ENCODE measurements at regions of chr13 and their contacts with region 1.

Region 1: DNA sequence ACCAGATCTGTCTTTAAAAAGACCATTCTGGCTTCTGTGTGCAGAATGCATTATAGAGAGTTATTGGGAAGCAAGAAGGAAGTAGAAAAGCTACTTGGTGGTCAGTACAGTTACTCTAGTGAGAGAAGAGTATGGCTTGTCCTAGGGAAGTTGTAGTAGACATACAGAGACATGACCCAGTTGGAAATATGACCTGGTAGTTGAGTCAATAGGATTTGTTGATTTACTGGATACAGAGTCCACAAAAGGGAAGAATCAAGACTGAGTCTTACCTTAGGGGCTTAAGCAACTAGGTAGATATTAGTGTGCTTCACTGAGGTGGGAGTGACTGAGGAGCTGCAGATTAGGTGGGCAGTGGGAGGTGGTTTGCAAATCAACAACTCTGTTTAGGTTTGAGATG is 48.8 kb downstream of the RASL11A start:
- DNase-seq: no peak
- H3K4me3 ChIP-seq: no peak overlapping the region
- H3K27ac ChIP-seq: no peak overlapping the region
- H3K4me1 ChIP-seq: no peaks in the 10 kb centered on the region
- H3K27me3 ChIP-seq: peaks cover 30% of the 10 kb centered on the region
- CTCF ChIP-seq: no peak

Region 2: GRCh38 chr13:27283906-27284493 is 35.4 kb before region 1 on chr13:
- CTCF ChIA-PET with region 1: no interaction called
- POLR2A ChIA-PET with region 1: no interaction called
- intact Hi-C with region 1: loop called (anchors 2 kb)
- DNase-seq: peak; percentile 46 to 49
- H3K4me3 ChIP-seq: no peak overlapping the region
- H3K27ac ChIP-seq: no peak overlapping the region
- H3K4me1 ChIP-seq: peaks cover 20% of the 10 kb centered on the region
- H3K27me3 ChIP-seq: no peaks in the 10 kb centered on the region
- CTCF ChIP-seq: peak; percentile 65

Measured in PC-9 (cell line).